Esophagus muscularis mucosa (tissue), 4 donors: ENCODE measurements at regions of chr4 and their contacts with region 1.

Region 1: DNA sequence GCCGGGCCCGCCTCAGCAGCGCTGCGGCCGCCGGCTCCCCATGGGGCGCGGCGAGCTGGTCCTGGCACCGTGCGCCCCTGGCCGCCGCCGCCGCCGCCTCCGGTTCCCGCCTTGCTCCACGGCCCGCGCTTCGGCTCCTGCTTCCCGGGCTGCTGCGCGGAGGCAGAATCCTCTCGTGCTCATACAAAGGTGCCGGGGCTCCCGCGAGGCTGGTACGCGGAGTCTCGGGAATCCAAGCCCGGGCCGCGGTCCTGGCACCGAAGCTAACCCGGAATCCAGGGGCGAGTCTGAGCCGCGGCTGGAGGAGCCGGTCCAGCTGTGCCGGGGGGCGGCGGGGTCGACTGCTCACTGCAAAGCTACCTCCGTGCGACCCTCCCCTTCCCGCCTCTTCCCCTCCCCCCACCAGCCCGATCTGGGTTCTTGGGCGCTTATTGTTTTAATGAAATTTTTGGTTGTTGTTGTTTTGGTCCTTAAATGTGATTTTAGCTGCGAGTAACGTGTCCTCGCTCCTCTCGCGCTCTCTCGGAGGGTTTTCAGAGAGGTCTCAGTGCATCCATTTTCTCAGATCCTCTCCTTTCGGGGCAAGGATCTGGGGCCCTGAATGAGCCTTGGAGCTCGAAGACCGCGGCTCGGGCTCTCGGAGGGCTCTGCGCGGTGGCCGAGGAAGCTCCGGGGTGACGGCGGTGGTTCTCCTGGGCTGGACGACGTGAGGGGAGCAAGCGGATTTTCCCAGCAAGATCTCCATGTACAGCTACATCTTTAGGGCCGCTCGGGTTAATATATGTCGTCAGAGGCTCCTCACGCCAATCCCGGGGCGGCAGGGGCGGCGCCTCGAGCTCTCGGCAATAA is at the start of gene HAND2:
- DNase-seq: no peak
- H3K4me3 ChIP-seq: peak within 1 kb of the TSS; percentile 82 to 90 (median 88)
- H3K27ac ChIP-seq: peak within 1 kb of the TSS; percentile 96 to 98 (median 98)
- H3K4me1 ChIP-seq: peaks cover 3 to 58% (median 38%) of the 10 kb centered on the region in 4 donors
- H3K27me3 ChIP-seq: peaks cover 0 to 54% (median 2%) of the 10 kb centered on the region in 4 donors
- CTCF ChIP-seq: no peak
- EP300 ChIP-seq: no peak
- POLR2A ChIP-seq: peak; percentile 81
- total RNA-seq, gene HAND2: 77.7 to 165 (median 138) TPM

Region 2: DNA sequence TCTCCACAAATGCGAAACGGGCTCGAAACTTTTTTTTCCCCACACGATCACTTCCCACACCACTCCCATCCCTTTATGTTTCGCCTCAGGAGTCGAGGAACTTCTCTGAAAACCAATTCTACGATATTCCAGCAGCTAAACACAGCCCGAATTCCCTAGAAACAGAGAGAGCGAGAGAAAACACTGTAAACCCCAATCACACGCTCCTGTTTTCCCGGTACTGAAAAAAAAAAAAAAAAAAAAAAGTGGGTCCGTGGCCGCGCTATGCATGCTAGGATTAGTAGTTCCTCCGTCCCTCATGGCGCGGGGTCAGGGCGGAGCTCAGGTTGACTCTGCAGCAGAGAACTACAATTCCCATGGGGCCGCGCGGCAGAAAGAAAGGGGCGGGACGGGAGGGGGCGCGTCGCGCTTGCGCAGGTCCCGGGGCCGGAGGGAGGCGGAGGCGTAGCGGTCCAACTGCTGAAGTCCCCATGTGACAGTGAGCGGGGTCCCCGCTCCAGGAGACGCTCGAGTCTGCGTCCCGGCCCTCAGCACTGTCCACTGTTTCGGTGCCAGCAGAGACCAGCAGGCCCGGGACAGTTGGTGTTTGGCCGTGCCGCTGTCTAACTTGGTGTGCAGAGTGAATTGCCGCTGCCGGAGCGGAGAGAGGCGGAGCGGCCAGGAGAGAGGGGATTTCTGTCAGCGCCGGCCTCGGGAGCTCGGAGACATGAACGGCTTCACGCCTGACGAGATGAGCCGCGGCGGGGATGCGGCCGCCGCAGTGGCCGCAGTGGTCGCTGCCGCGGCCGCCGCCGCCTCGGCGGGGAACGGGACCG is 159.0 kb before region 1 on chr4 and contains the start of gene SAP30:
- intact Hi-C with region 1: no loop called
- DNase-seq: peak; percentile 100
- H3K4me3 ChIP-seq: peak within 1 kb of the TSS; percentile 74 to 90 (median 88)
- H3K27ac ChIP-seq: peak within 1 kb of the TSS; percentile 89 to 95 (median 93)
- H3K4me1 ChIP-seq: peaks cover 21 to 65% (median 53%) of the 10 kb centered on the region in 4 donors
- H3K27me3 ChIP-seq: no peaks in the 10 kb centered on the region
- CTCF ChIP-seq: no peak
- EP300 ChIP-seq: no peak
- POLR2A ChIP-seq: peak; percentile 98
- total RNA-seq, gene SAP30: 39.6 to 56.2 (median 43.7) TPM

Region 3: GRCh38 chr4:173748353-173748752 is 218.7 kb after region 1 on chr4:
- intact Hi-C with region 1: loop called (anchors 10 kb)
- DNase-seq: no peak
- H3K4me3 ChIP-seq: no peak overlapping the region
- H3K27ac ChIP-seq: peak overlapping the region in 1 of 4 donors; percentile 4
- H3K4me1 ChIP-seq: no peaks in the 10 kb centered on the region
- H3K27me3 ChIP-seq: no peaks in the 10 kb centered on the region
- CTCF ChIP-seq: peak; percentile 32 to 44 (median 36)
- EP300 ChIP-seq: no peak
- POLR2A ChIP-seq: no peak